BJ (cell line): ENCODE measurements at regions of chr11 and their contacts with region 1.

Region 1: GRCh38 chr11:76161261-76161961 is 44.9 kb downstream of the WNT11 start:
- DNase-seq: no peak
- H3K4me3 ChIP-seq: no peak overlapping the region
- H3K27me3 ChIP-seq: peaks cover 10% of the 10 kb centered on the region
- CTCF ChIP-seq: no peak

Region 2: GRCh38 chr11:76119032-76119431 is 42.4 kb before region 1 on chr11:
- CTCF ChIA-PET with region 1: no interaction called
- POLR2A ChIA-PET with region 1: no interaction called
- DNase-seq: no peak
- H3K4me3 ChIP-seq: no peak overlapping the region
- H3K27me3 ChIP-seq: no peaks in the 10 kb centered on the region
- CTCF ChIP-seq: no peak

Region 3: GRCh38 chr11:76185931-76186401 is 24.6 kb after region 1 on chr11:
- CTCF ChIA-PET with region 1: interaction called, 4 read pairs
- POLR2A ChIA-PET with region 1: interaction called, 11 read pairs
- DNase-seq: no peak
- H3K4me3 ChIP-seq: no peak overlapping the region
- H3K27me3 ChIP-seq: peaks cover 2% of the 10 kb centered on the region
- CTCF ChIP-seq: no peak